Calu3 (cell line): ENCODE measurements at regions of chr6 and their contacts with region 1.

Region 1: DNA sequence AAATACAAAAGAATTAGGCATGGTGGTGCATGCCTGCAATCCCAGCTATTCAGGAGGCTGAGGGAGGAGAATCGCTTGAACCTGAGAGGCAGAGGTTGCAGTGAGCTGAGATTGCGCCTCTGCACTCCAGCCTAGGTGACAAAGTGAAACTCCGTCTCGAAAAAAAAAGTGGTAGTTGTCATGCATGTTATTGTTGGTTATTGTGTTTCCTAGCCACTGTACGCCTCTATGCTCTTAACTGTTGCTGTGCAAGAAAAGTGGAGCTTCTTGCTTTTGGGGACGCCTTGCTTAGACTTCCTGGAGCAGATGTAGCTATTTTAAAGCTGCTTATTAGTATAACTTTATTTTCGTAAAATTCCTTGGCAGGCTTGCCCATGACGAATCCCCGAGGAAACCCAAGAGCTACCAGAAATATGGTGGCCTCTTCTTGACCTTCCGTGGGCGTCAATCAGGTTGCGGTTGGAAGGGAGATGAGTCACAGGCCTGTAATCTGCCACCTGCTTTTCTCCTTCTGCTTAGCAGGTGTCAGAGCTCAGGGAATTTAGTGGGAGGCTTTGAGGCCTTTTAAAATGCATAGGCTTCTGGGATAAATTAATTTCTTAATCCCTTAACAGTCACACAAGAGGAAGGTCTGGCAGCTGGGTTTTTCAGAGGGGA is 17.3 kb downstream of the GABRR2 start:
- DNase-seq: peak; percentile 90
- H3K4me3 Mint-ChIP-seq: peak overlapping the region; percentile 47
- H3K27ac Mint-ChIP-seq: peak overlapping the region; percentile 98
- H3K4me1 Mint-ChIP-seq: peaks cover 44% of the 10 kb centered on the region
- H3K27me3 Mint-ChIP-seq: no peaks in the 10 kb centered on the region
- CTCF ChIP-seq: no peak

Region 2: GRCh38 chr6:89311853-89312531 is 14.2 kb after region 1 on chr6:
- CTCF ChIA-PET with region 1: interaction called, 10 read pairs
- intact Hi-C with region 1: no loop called
- DNase-seq: peak; percentile 43
- H3K4me3 Mint-ChIP-seq: peak overlapping the region; percentile 13
- H3K27ac Mint-ChIP-seq: peak overlapping the region; percentile 5
- H3K4me1 Mint-ChIP-seq: peaks cover 28% of the 10 kb centered on the region
- H3K27me3 Mint-ChIP-seq: no peaks in the 10 kb centered on the region
- CTCF ChIP-seq: no peak

Region 3: GRCh38 chr6:89352278-89353117 is 54.7 kb after region 1 on chr6 and contains the start of gene UBE2J1:
- CTCF ChIA-PET with region 1: interaction called, 5 read pairs
- intact Hi-C with region 1: loop called (anchors 5 kb)
- DNase-seq: peak; percentile 89
- H3K4me3 Mint-ChIP-seq: peak within 1 kb of the TSS; percentile 83
- H3K27ac Mint-ChIP-seq: peak within 1 kb of the TSS; percentile 84
- H3K4me1 Mint-ChIP-seq: peaks cover 33% of the 10 kb centered on the region
- H3K27me3 Mint-ChIP-seq: no peaks in the 10 kb centered on the region
- CTCF ChIP-seq: no peak
- total RNA-seq, gene UBE2J1: 16.6 and 18.7 TPM in 2 replicates

Region 4: GRCh38 chr6:89436226-89436625 is 138.4 kb after region 1 on chr6:
- CTCF ChIA-PET with region 1: no interaction called
- intact Hi-C with region 1: no loop called
- DNase-seq: no peak
- H3K4me3 Mint-ChIP-seq: no peak overlapping the region
- H3K27ac Mint-ChIP-seq: no peak overlapping the region
- H3K4me1 Mint-ChIP-seq: peaks cover 17% of the 10 kb centered on the region
- H3K27me3 Mint-ChIP-seq: no peaks in the 10 kb centered on the region
- CTCF ChIP-seq: no peak

Region 5: DNA sequence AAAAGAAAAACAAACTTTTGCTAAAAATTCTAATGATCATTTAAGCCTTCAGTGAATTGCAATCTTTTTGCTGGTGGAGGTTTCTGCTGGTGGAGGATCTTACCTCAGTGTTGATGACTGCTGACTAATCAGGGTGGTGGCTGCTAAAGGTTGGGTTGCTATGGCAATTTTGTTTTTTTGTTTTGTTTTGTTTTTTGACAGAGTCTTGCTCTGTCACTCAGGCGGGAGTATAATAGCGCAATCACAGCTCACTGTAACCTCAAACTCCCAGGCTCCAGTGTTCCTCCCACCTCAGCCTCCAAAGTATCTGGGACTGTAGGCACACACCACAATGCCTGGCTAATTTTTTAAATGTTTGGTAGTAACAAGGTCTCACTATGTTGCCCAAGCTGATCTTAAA is 229.8 kb after region 1 on chr6:
- CTCF ChIA-PET with region 1: no interaction called
- intact Hi-C with region 1: no loop called
- DNase-seq: no peak
- H3K4me3 Mint-ChIP-seq: no peak overlapping the region
- H3K27ac Mint-ChIP-seq: no peak overlapping the region
- H3K4me1 Mint-ChIP-seq: no peaks in the 10 kb centered on the region
- H3K27me3 Mint-ChIP-seq: no peaks in the 10 kb centered on the region
- CTCF ChIP-seq: no peak